Activated CD8-positive, alpha-beta memory T cell treated with anti-CD3 and anti-CD28 coated beads, Interleukin-2, amount 10 ng/mL, durations not matched to agents 7 days and 5 days (primary cell): ENCODE measurements at regions of chr10 and their contacts with region 1.

Region 1: GRCh38 chr10:79286318-79286951 is 60.8 kb upstream of the PPIF start:
- DNase-seq: peak; percentile 96
- ATAC-seq: peak; percentile 89
- H3K4me3 Mint-ChIP-seq: peak overlapping the region; percentile 66
- H3K27ac Mint-ChIP-seq: peak overlapping the region; percentile 95
- H3K4me1 Mint-ChIP-seq: peaks cover 69% of the 10 kb centered on the region
- H3K27me3 Mint-ChIP-seq: no peaks in the 10 kb centered on the region

Region 2: GRCh38 chr10:79068562-79069324 is 217.7 kb before region 1 on chr10 and contains the start of gene ZMIZ1:
- CTCF ChIA-PET with region 1: no interaction called
- DNase-seq: peak; percentile 88
- ATAC-seq: peak; percentile 68
- H3K4me3 Mint-ChIP-seq: peak within 1 kb of the TSS; percentile 91
- H3K27ac Mint-ChIP-seq: peak within 1 kb of the TSS; percentile 77
- H3K4me1 Mint-ChIP-seq: peaks cover 24% of the 10 kb centered on the region
- H3K27me3 Mint-ChIP-seq: peaks cover 20% of the 10 kb centered on the region
- total RNA-seq, gene ZMIZ1: 52.7 to 71.5 TPM

Region 3: GRCh38 chr10:79249186-79250121 is 37.0 kb before region 1 on chr10:
- CTCF ChIA-PET with region 1: interaction called, 14 read pairs
- DNase-seq: peak; percentile 69
- ATAC-seq: peak; percentile 77
- H3K4me3 Mint-ChIP-seq: peak overlapping the region; percentile 58
- H3K27ac Mint-ChIP-seq: peak overlapping the region; percentile 99
- H3K4me1 Mint-ChIP-seq: peaks cover 82% of the 10 kb centered on the region
- H3K27me3 Mint-ChIP-seq: no peaks in the 10 kb centered on the region

Region 4: GRCh38 chr10:79316671-79317431 is 30.4 kb after region 1 on chr10:
- CTCF ChIA-PET with region 1: interaction called, 42 read pairs
- DNase-seq: peak; percentile 74
- ATAC-seq: peak; percentile 69
- H3K4me3 Mint-ChIP-seq: peak overlapping the region; percentile 74
- H3K27ac Mint-ChIP-seq: peak overlapping the region; percentile 94
- H3K4me1 Mint-ChIP-seq: peaks cover 60% of the 10 kb centered on the region
- H3K27me3 Mint-ChIP-seq: no peaks in the 10 kb centered on the region

Region 5: DNA sequence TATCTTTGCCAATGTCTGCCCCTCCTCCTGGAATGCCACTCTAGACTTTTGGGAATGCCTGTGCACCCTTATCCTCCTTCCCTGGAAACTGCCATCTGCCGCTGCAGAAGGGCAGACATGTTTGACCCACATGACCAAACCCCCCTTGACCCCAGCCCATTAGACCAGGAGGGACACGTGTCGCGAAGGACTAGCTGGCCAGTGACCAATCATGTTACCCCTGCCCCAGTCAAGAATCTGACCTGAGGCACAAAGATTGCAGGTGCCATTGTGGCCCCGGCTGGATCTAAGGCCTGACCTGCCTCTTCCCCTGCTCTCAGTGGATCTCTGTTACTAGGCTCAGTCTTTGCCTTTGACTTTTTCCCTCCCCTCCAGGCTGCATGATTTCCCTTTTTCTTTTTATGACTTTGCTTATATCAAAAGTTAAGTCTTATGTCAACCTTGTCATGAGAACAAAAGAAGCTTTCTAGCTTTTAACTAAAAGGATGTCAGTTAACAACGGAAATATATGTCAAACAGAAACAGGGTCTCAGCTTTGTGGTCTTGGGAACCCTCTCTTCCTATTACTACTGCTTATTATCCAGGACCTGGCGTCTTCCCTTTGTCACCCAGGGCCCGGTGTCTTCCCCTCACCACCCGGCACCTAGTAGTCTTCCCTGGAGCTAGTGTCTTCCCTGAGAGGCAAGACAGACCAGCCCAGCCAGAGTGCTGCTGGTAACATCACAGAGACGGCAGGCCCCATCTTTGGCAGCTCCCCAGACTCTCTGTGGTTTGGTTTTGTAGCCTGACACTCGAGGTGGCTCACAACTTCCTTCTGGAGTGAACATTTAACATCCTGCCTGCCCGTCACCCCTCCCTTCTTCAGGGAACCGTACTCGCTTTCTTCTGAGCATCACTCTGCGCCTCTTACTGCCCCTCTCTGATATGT is 36.4 kb after region 1 on chr10:
- CTCF ChIA-PET with region 1: interaction called, 42 read pairs
- DNase-seq: peak; percentile 91
- ATAC-seq: peak; percentile 81
- H3K4me3 Mint-ChIP-seq: peak overlapping the region; percentile 59
- H3K27ac Mint-ChIP-seq: peak overlapping the region; percentile 97
- H3K4me1 Mint-ChIP-seq: peaks cover 72% of the 10 kb centered on the region
- H3K27me3 Mint-ChIP-seq: no peaks in the 10 kb centered on the region